AG04450 (cell line): ENCODE measurements at regions of chr11 and their contacts with region 1.

Region 1: DNA sequence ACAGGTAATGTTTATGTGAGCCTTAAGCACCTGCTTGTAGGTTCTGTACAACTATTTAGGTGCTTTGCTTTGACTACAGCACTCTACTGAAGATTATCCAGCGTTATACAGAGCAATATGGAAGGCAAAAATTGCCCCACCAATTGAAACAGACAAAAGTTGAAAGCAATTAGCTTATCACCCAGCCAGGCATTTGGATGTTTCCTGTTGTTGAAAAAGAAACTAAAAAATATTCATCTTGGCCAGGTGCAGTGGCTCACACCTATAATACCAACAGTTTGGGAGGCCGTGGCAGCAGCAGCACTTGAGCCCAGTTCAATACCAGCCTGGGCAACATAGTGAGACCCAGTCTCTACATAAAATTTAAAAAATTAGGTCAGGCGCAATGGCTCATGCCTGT is 18.5 kb downstream of the ATL3 start:
- DNase-seq: no peak
- H3K4me3 ChIP-seq: no peak overlapping the region
- H3K27ac ChIP-seq: no peak overlapping the region
- H3K27me3 ChIP-seq: no peaks in the 10 kb centered on the region
- CTCF ChIP-seq: no peak

Region 2: DNA sequence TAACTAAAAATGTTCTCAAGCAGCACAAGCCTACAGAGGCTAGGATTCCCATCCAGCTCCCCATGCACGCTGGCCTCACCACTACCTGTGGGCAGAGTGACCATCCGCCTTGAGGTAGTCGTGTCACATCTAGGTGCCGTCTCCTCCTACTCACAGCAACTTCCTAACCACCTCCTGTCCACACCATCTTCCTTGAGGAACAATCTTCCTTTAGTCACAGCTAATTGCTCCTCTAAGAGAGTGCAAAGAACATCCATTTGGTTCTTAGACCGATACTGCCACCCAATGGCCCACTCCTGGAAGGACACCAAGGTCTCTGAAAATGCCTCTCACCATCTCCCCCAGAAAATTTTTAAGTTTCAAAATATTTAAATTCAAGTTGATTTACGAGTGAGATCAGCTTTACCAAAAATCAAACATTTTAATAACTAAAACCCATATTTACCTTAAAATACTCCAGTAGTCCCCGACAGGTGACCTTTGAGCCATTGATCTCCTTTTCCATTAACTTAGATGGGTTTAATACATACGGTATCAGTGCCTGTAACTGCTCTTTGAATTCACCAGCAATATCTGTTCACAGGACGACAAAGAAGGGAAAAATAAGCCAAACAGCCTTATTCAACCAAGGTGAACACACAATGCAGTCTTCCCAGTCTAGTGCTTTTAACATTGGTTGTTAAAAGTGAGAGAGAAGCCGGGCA is 16.8 kb before region 1 on chr11:
- CTCF ChIA-PET with region 1: interaction called, 13 read pairs
- POLR2A ChIA-PET with region 1: no interaction called
- DNase-seq: peak; percentile 27
- H3K4me3 ChIP-seq: no peak overlapping the region
- H3K27ac ChIP-seq: no peak overlapping the region
- H3K27me3 ChIP-seq: no peaks in the 10 kb centered on the region
- CTCF ChIP-seq: peak; percentile 89

Region 3: DNA sequence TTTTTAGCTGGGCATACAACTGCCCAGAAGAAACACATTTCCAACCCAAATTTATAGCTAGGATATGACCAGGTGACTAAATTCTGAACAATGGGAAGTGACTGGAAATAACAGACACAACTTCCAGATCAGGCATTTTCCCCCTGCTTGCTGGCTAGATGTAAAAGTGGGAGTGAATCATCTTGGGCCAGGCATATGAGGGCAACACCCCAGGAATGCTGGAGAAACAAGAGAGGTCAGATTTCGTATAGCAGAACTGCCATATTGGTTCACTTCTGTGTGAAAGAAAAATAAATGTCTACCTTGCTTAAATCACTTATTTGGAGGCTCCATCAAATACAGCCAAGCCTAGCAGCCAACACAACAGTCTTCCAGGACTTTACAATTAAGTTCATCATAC is 11.1 kb after region 1 on chr11:
- CTCF ChIA-PET with region 1: interaction called, 11 read pairs
- POLR2A ChIA-PET with region 1: no interaction called
- DNase-seq: no peak
- H3K4me3 ChIP-seq: no peak overlapping the region
- H3K27ac ChIP-seq: peak overlapping the region; percentile 0
- H3K27me3 ChIP-seq: no peaks in the 10 kb centered on the region
- CTCF ChIP-seq: no peak